AG04450 (cell line): ENCODE measurements at regions of chr7 and their contacts with region 1.

Region 1: DNA sequence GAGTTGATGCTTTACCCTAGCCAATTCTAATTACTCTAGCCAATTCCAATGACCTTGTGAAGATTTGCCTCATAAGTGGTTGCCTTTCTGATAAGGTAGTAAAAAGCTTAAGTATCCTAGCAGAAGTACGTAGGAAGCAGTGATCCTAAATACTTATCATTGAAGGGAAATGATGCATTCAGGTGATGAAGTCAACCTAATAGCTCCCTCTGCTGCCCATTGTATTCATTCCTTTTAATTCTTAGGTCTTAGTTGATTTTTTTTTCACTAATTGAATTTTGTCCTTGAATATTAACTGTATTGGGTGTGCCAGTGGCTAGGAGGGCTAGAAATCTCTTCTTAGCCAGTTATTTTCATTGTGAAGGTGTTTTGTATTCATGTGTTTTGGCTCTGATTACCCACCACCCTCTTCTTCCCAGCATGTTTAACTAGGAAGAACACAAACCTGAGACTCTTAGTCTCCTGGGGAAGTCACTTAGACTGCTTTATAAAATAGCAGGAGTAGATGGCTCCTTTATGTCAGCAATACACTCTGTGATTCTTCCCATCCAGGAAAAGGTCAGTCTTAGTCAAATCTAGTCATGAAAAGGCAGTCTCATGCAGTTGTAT is 46.3 kb downstream of the PLEKHA8 start:
- DNase-seq: no peak
- H3K4me3 ChIP-seq: no peak overlapping the region
- H3K27ac ChIP-seq: no peak overlapping the region
- H3K27me3 ChIP-seq: no peaks in the 10 kb centered on the region
- CTCF ChIP-seq: peak; percentile 62

Region 2: GRCh38 chr7:29878081-29878688 is 196.3 kb before region 1 on chr7:
- CTCF ChIA-PET with region 1: interaction called, 23 read pairs
- POLR2A ChIA-PET with region 1: no interaction called
- DNase-seq: peak; percentile 20
- H3K4me3 ChIP-seq: no peak overlapping the region
- H3K27ac ChIP-seq: no peak overlapping the region
- H3K27me3 ChIP-seq: peaks cover 7% of the 10 kb centered on the region
- CTCF ChIP-seq: peak; percentile 66

Region 3: GRCh38 chr7:30091491-30091912 is 17.0 kb after region 1 on chr7:
- CTCF ChIA-PET with region 1: interaction called, 11 read pairs
- POLR2A ChIA-PET with region 1: no interaction called
- DNase-seq: peak; percentile 16
- H3K4me3 ChIP-seq: no peak overlapping the region
- H3K27ac ChIP-seq: peak overlapping the region; percentile 58
- H3K27me3 ChIP-seq: no peaks in the 10 kb centered on the region
- CTCF ChIP-seq: no peak